ENCODE measurements at regions of chr11 and their contacts with region 1.

Region 1: GRCh38 chr11:1572197-1573076 is at the start of gene DUSP8:
- DNase-seq: peak; percentile 82 to 92 (median 90)
- ATAC-seq: peak; percentile 60 to 72 (median 62)
- H3K4me3 ChIP-seq: peak within 1 kb of the TSS; percentile 40 to 65 (median 43)
- H3K27ac ChIP-seq: peak within 1 kb of the TSS; percentile 40 to 70 (median 40)
- H3K4me1 ChIP-seq: peaks cover 0 to 19% (median 5%) of the 10 kb centered on the region in 4 donors
- H3K27me3 ChIP-seq: no peaks in the 10 kb centered on the region
- CTCF ChIP-seq: no peak
- POLR2A ChIP-seq: peak; percentile 71
- total RNA-seq, gene DUSP8: 0.22 to 13.7 (median 4.4) TPM

Region 2: DNA sequence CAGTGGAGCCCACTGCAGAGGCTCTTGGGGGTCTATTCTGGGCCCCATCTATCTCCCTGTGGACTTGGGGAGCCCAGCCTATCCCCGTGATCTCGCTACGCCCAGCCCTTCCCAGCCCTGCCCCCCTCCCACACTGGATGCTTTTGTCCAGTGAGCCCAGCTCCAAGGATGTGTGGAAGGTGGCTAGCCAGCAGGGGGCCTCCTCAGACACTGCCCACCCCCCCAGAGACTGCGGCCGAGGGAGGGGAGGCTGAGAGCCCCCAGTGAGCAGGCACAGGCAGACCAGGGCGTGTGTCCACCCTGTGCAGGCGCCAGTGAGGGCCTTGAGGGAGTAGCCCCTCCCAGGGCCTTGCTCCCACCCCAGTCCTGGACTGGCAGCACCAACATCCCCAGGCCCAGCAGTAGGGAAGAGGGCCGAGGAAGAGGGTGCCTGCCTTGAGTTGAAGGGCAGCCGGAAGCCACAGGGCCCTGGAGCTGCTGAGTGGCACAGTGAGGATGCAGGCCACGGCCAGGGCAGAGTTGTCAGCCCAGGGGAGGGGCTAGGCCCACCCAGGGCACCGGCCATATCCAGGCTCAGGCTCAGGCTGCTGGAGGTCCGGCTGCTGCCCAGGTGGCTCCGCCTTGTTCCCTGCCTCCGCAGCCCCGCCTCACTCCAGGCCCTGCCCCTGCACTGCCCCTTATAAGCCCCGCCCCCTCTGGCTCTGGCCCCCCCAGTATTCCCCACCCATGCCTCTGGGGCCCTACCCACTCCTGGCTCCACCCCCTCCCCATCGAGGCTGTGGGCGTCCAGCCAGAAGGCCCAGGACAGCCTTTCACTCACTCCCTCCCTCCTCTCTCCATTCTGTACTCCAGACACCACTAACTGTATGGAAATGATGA is 113.9 kb before region 1 on chr11:
- intact Hi-C with region 1: loop called in 1 of 2 experiments (anchors 10 kb)
- DNase-seq: no peak
- ATAC-seq: peak; percentile 6 to 32 (median 14)
- H3K4me3 ChIP-seq: no peak overlapping the region
- H3K27ac ChIP-seq: no peak overlapping the region
- H3K4me1 ChIP-seq: no peaks in the 10 kb centered on the region
- H3K27me3 ChIP-seq: no peaks in the 10 kb centered on the region
- CTCF ChIP-seq: peak in 3 of 4 donors; percentile 9 to 21 (median 19)
- POLR2A ChIP-seq: no peak

Region 3: GRCh38 chr11:1763796-1764661 is 191.6 kb after region 1 on chr11 and contains the start of gene CTSD:
- intact Hi-C with region 1: no loop called
- DNase-seq: peak; percentile 94 to 95 (median 94)
- ATAC-seq: peak; percentile 44 to 69 (median 63)
- H3K4me3 ChIP-seq: peak within 1 kb of the TSS; percentile 79 to 98 (median 97)
- H3K27ac ChIP-seq: peak within 1 kb of the TSS; percentile 82 to 99 (median 97)
- H3K4me1 ChIP-seq: peaks cover 0 to 37% (median 16%) of the 10 kb centered on the region in 4 donors
- H3K27me3 ChIP-seq: no peaks in the 10 kb centered on the region
- CTCF ChIP-seq: peak in 1 of 4 donors; percentile 4
- POLR2A ChIP-seq: peak; percentile 85
- total RNA-seq, gene CTSD: 515 to 1,549 (median 1,009) TPM

Measured in right lobe of liver (tissue), 6 donors.